Activated CD8-positive, alpha-beta memory T cell treated with anti-CD3 and anti-CD28 coated beads, Interleukin-2, amount 10 ng/mL, durations not matched to agents 7 days and 5 days (primary cell): ENCODE measurements at regions of chr7 and their contacts with region 1.

Region 1: GRCh38 chr7:97179454-97180104 is 62.1 kb downstream of the SDHAF3 start:
- DNase-seq: peak; percentile 55
- ATAC-seq: peak; percentile 55
- H3K4me3 Mint-ChIP-seq: no peak overlapping the region
- H3K27ac Mint-ChIP-seq: no peak overlapping the region
- H3K4me1 Mint-ChIP-seq: peaks cover 1% of the 10 kb centered on the region
- H3K27me3 Mint-ChIP-seq: no peaks in the 10 kb centered on the region

Region 2: GRCh38 chr7:97117372-97118188 is 62.0 kb before region 1 on chr7 and contains the start of gene SDHAF3:
- CTCF ChIA-PET with region 1: interaction called, 10 read pairs
- DNase-seq: peak; percentile 99
- ATAC-seq: peak; percentile 96
- H3K4me3 Mint-ChIP-seq: peak within 1 kb of the TSS; percentile 92
- H3K27ac Mint-ChIP-seq: peak within 1 kb of the TSS; percentile 93
- H3K4me1 Mint-ChIP-seq: peaks cover 28% of the 10 kb centered on the region
- H3K27me3 Mint-ChIP-seq: no peaks in the 10 kb centered on the region
- total RNA-seq, gene SDHAF3: 14.7 to 17.9 TPM

Region 3: GRCh38 chr7:97555857-97556421 is 376.4 kb after region 1 on chr7:
- CTCF ChIA-PET with region 1: no interaction called
- DNase-seq: no peak
- ATAC-seq: no peak
- H3K4me3 Mint-ChIP-seq: no peak overlapping the region
- H3K27ac Mint-ChIP-seq: no peak overlapping the region
- H3K4me1 Mint-ChIP-seq: no peaks in the 10 kb centered on the region
- H3K27me3 Mint-ChIP-seq: no peaks in the 10 kb centered on the region